ENCODE measurements at regions of chr10 and their contacts with region 1.

Region 1: GRCh38 chr10:114470956-114471905 is 66.9 kb upstream of the AFAP1L2 start:
- DNase-seq: peak; percentile 78
- H3K4me3 ChIP-seq: no peak overlapping the region
- H3K27ac ChIP-seq: no peak overlapping the region
- H3K4me1 ChIP-seq: no peaks in the 10 kb centered on the region
- H3K27me3 ChIP-seq: no peaks in the 10 kb centered on the region
- CTCF ChIP-seq: peak; percentile 79 to 85
- POLR2A ChIP-seq: no peak

Region 2: GRCh38 chr10:113704637-113705343 is 766.4 kb before region 1 on chr10:
- CTCF ChIA-PET with region 1: no interaction called
- POLR2A ChIA-PET with region 1: no interaction called
- dilution Hi-C with region 1: no loop called
- intact Hi-C with region 1: no loop called
- DNase-seq: peak; percentile 50
- H3K4me3 ChIP-seq: no peak overlapping the region
- H3K27ac ChIP-seq: no peak overlapping the region
- H3K4me1 ChIP-seq: peaks cover 20% of the 10 kb centered on the region
- H3K27me3 ChIP-seq: no peaks in the 10 kb centered on the region
- CTCF ChIP-seq: peak; percentile 52 to 59
- POLR2A ChIP-seq: no peak

Region 3: DNA sequence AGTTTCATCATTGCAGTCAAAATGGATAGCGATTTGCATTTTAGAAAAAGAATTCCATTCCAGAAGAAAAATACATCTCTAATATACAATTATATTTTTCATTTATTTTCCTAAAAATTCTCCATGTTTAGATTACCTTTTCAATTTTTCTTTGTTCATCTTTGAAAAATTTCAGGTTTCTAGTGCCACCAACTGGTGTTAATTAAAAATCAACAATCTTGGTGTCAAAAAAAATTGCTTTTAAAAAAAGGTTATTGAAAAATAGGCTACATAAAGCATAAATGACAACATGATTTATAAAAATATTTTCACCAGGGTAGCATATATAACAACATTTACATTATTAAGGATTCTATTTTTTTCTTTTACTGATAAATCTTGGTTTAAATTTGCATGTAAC is 350.2 kb before region 1 on chr10:
- CTCF ChIA-PET with region 1: no interaction called
- POLR2A ChIA-PET with region 1: no interaction called
- dilution Hi-C with region 1: no loop called
- intact Hi-C with region 1: no loop called
- DNase-seq: no peak
- H3K4me3 ChIP-seq: no peak overlapping the region
- H3K27ac ChIP-seq: no peak overlapping the region
- H3K4me1 ChIP-seq: no peaks in the 10 kb centered on the region
- H3K27me3 ChIP-seq: no peaks in the 10 kb centered on the region
- CTCF ChIP-seq: no peak
- POLR2A ChIP-seq: no peak

Region 4: GRCh38 chr10:114486938-114487814 is 15.9 kb after region 1 on chr10:
- CTCF ChIA-PET with region 1: interaction called, 44 read pairs
- POLR2A ChIA-PET with region 1: no interaction called
- dilution Hi-C with region 1: no loop called
- intact Hi-C with region 1: no loop called
- DNase-seq: peak; percentile 86
- H3K4me3 ChIP-seq: no peak overlapping the region
- H3K27ac ChIP-seq: peak overlapping the region; percentile 19
- H3K4me1 ChIP-seq: peaks cover 25% of the 10 kb centered on the region
- H3K27me3 ChIP-seq: no peaks in the 10 kb centered on the region
- CTCF ChIP-seq: no peak
- POLR2A ChIP-seq: no peak

Region 5: GRCh38 chr10:114526504-114527238 is 55.4 kb after region 1 on chr10:
- CTCF ChIA-PET with region 1: interaction called, 29 read pairs
- POLR2A ChIA-PET with region 1: no interaction called
- dilution Hi-C with region 1: no loop called
- intact Hi-C with region 1: loop called (anchors 1 kb)
- DNase-seq: peak; percentile 97
- H3K4me3 ChIP-seq: peak overlapping the region in 2 of 3 experiments; percentile 38 to 41
- H3K27ac ChIP-seq: peak overlapping the region; percentile 35
- H3K4me1 ChIP-seq: peaks cover 18% of the 10 kb centered on the region
- H3K27me3 ChIP-seq: no peaks in the 10 kb centered on the region
- CTCF ChIP-seq: no peak
- POLR2A ChIP-seq: peak; percentile 69

Region 6: DNA sequence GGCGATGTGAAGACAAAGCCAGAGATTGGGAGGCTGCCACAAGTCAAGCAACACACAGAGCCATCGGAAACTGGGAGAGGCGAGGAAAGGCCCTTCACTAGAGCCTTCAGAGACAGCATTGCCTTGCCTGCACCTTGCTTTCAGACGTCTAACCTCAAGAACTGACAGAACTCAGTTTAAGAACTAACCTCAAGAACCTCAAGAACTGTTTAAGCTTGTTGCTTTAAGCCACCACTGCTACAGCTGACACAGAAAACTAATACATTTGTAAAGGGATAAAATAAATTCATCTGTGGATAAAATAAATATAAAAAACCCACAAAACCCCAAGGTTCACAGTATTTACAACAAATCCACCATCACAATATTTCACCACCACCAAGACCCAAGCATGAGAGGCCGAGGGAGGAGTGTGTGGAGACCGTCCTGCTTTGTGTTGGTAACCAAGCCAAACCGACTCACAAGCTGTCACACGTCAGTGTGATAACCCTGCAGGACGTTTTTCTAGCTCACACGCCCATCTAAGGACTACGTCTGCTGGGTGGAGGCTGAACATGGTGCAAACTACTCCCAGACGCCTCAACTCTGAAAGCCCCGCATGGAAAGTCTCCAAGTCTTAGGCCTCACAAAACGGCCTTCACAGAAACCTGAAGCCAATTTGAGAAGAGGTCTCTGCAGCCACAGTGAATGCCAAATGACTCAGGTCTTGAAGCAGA is 70.0 kb after region 1 on chr10:
- CTCF ChIA-PET with region 1: interaction called, 208 read pairs
- POLR2A ChIA-PET with region 1: no interaction called
- dilution Hi-C with region 1: no loop called
- intact Hi-C with region 1: no loop called
- DNase-seq: peak; percentile 53
- H3K4me3 ChIP-seq: no peak overlapping the region
- H3K27ac ChIP-seq: no peak overlapping the region
- H3K4me1 ChIP-seq: peaks cover 7% of the 10 kb centered on the region
- H3K27me3 ChIP-seq: no peaks in the 10 kb centered on the region
- CTCF ChIP-seq: no peak
- POLR2A ChIP-seq: no peak

Region 7: GRCh38 chr10:114694752-114695151 is 223.5 kb after region 1 on chr10:
- CTCF ChIA-PET with region 1: interaction called, 31 read pairs
- POLR2A ChIA-PET with region 1: no interaction called
- dilution Hi-C with region 1: no loop called
- intact Hi-C with region 1: no loop called
- DNase-seq: peak; percentile 62
- H3K4me3 ChIP-seq: no peak overlapping the region
- H3K27ac ChIP-seq: no peak overlapping the region
- H3K4me1 ChIP-seq: peaks cover 15% of the 10 kb centered on the region
- H3K27me3 ChIP-seq: no peaks in the 10 kb centered on the region
- CTCF ChIP-seq: peak; percentile 54 to 70
- POLR2A ChIP-seq: no peak

Region 8: GRCh38 chr10:114779803-114780609 is 308.8 kb after region 1 on chr10:
- CTCF ChIA-PET with region 1: interaction called, 47 read pairs
- POLR2A ChIA-PET with region 1: no interaction called
- dilution Hi-C with region 1: no loop called
- intact Hi-C with region 1: no loop called
- DNase-seq: peak; percentile 97
- H3K4me3 ChIP-seq: no peak overlapping the region
- H3K27ac ChIP-seq: peak overlapping the region; percentile 91
- H3K4me1 ChIP-seq: peaks cover 21% of the 10 kb centered on the region
- H3K27me3 ChIP-seq: no peaks in the 10 kb centered on the region
- CTCF ChIP-seq: no peak
- POLR2A ChIP-seq: no peak

Region 9: DNA sequence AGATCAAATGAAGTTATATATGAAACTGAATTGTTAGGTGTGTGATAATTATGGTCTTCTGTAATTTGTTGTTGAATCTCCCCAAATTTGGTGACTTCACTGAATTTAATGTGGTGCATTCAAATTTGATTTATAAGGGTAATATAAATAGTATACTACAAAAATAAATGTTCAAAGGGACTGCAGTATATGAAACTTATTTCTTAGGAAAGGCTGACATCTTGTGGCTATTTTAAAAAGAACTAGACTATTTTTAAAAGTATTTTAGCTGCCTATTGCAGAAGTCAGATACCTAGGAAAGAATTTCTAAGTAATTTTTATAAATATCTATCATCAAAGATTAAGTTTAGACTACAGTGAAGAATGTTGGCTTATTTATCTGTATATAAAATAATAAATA is 658.5 kb after region 1 on chr10:
- CTCF ChIA-PET with region 1: interaction called, 12 read pairs
- POLR2A ChIA-PET with region 1: no interaction called
- dilution Hi-C with region 1: no loop called
- intact Hi-C with region 1: no loop called
- DNase-seq: peak; percentile 46
- H3K4me3 ChIP-seq: no peak overlapping the region
- H3K27ac ChIP-seq: no peak overlapping the region
- H3K4me1 ChIP-seq: no peaks in the 10 kb centered on the region
- H3K27me3 ChIP-seq: no peaks in the 10 kb centered on the region
- CTCF ChIP-seq: no peak
- POLR2A ChIP-seq: no peak

Measured in endothelial cell of umbilical vein (primary cell).